ENCODE measurements at regions of chr9 and their contacts with region 1.

Region 1: DNA sequence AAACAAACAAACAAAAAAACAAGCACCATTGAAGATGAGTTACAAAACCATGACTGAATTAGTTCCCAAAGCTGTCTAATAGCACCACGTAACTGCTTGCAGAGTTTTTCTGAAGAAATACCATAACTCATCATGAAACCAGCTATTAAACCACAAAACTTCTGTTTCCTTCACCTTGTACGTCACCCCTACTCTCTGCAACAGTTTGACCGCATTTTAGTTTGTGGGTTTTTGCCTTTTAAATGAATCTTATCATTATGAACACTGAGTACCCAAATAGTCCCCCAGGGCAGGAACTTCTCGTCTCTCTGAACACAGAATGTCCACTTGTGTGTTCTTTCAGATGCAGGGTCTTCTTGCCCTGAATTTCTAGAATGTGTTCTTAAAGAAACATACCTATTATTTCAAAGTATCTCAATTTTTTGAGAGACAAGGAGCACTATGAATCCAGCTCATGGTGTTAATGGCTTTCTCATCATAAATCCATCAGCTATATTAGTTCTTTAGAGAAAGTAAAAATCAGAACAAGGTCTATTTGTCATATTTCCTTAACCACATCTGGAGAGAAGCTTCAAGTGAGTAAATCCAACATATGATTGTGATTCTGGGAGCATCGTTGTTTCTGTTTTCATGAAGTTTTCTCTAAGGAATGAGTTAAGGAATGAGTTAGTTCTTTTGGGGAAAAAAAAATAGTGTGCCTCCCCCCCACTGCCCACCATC is 210.6 kb downstream of the AUH start:
- DNase-seq: peak; percentile 65
- H3K4me3 Mint-ChIP-seq: peak overlapping the region; percentile 48
- H3K27ac Mint-ChIP-seq: peak overlapping the region; percentile 91
- H3K4me1 Mint-ChIP-seq: peaks cover 94% of the 10 kb centered on the region
- H3K27me3 Mint-ChIP-seq: no peaks in the 10 kb centered on the region

Region 2: GRCh38 chr9:90921111-90921510 is 230.0 kb before region 1 on chr9:
- CTCF ChIA-PET with region 1: no interaction called
- POLR2A ChIA-PET with region 1: no interaction called
- DNase-seq: no peak
- H3K4me3 Mint-ChIP-seq: no peak overlapping the region
- H3K27ac Mint-ChIP-seq: no peak overlapping the region
- H3K4me1 Mint-ChIP-seq: peaks cover 2% of the 10 kb centered on the region
- H3K27me3 Mint-ChIP-seq: peaks cover 4% of the 10 kb centered on the region

Region 3: GRCh38 chr9:91036826-91037510 is 114.2 kb before region 1 on chr9:
- CTCF ChIA-PET with region 1: interaction called, 15 read pairs
- POLR2A ChIA-PET with region 1: interaction called, 17 read pairs
- DNase-seq: peak; percentile 85
- H3K4me3 Mint-ChIP-seq: peak overlapping the region; percentile 31
- H3K27ac Mint-ChIP-seq: peak overlapping the region; percentile 74
- H3K4me1 Mint-ChIP-seq: peaks cover 65% of the 10 kb centered on the region
- H3K27me3 Mint-ChIP-seq: no peaks in the 10 kb centered on the region

Region 4: DNA sequence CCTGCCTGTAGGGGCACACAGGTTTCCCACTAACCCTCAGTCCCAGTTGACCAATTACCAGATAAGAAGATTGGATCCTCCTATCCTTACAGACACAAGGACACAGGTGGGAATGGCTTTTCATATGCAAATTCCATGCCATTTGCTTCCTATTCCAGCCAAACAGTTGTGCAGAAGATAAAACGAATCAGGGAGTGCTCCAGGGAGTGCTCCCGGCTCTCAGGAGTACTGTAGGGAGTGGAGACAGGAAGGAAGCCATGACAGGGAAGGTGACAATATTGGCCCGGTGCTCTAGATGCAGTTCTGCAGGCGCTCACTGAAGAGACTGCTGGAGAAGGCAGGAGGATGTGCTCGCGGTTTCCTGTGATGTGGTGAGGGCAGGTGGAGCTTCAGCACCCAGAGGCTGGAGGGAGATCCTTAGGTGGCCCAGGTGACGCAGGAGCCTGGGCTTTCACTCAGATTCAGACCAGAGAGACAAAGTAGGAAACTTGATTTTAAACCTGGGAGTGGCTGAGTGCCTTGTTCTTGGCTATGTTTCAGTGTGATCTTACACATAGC is 49.5 kb before region 1 on chr9:
- CTCF ChIA-PET with region 1: interaction called, 8 read pairs
- POLR2A ChIA-PET with region 1: interaction called, 101 read pairs
- DNase-seq: peak; percentile 94
- H3K4me3 Mint-ChIP-seq: peak overlapping the region; percentile 62
- H3K27ac Mint-ChIP-seq: peak overlapping the region; percentile 81
- H3K4me1 Mint-ChIP-seq: peaks cover 77% of the 10 kb centered on the region
- H3K27me3 Mint-ChIP-seq: no peaks in the 10 kb centered on the region

Region 5: DNA sequence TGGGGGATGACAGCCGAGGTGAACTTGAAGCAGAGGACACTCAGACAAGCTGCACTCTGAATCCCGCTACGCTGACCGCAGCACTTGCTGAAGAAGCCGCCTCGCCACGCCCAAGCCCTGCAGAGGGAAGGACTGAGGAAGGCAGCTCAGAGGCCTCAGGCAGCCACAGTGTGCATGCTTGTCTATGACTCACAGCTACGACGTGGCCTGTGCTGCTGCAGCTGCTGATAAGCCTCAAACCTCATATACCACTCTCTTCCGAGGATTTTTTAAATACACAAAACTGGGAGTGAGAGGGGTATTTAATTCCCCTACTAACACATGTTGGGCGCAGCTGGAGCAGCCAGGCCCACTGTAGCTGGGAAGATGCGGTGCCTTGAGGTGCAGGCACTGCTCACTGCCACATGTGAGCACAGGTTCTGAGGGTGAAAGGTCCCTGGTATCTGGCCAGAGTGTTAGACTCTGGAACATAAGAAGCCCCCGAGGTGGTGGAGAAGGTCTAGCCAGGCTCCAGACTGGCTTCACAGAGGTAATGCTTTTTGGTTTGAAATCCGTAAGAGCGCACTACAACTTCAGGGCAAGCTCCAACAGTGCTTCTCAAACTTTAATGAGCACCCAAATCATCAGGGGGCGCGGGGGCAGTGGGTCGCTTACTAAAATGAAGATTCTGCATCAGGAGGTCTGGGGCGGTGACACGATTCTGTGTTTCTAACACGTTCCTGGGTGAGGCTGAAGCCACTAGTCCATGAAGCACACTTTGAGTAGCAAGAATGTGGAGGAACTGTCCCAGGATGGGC is 13.8 kb after region 1 on chr9:
- CTCF ChIA-PET with region 1: interaction called, 26 read pairs
- POLR2A ChIA-PET with region 1: interaction called, 346 read pairs
- DNase-seq: peak; percentile 91
- H3K4me3 Mint-ChIP-seq: peak overlapping the region; percentile 88
- H3K27ac Mint-ChIP-seq: peak overlapping the region; percentile 94
- H3K4me1 Mint-ChIP-seq: peaks cover 70% of the 10 kb centered on the region
- H3K27me3 Mint-ChIP-seq: no peaks in the 10 kb centered on the region

Region 6: GRCh38 chr9:91193658-91194391 is 42.7 kb after region 1 on chr9:
- CTCF ChIA-PET with region 1: interaction called, 11 read pairs
- POLR2A ChIA-PET with region 1: interaction called, 126 read pairs
- DNase-seq: peak; percentile 92
- H3K4me3 Mint-ChIP-seq: peak overlapping the region; percentile 77
- H3K27ac Mint-ChIP-seq: peak overlapping the region; percentile 98
- H3K4me1 Mint-ChIP-seq: peaks cover 75% of the 10 kb centered on the region
- H3K27me3 Mint-ChIP-seq: no peaks in the 10 kb centered on the region

Region 7: DNA sequence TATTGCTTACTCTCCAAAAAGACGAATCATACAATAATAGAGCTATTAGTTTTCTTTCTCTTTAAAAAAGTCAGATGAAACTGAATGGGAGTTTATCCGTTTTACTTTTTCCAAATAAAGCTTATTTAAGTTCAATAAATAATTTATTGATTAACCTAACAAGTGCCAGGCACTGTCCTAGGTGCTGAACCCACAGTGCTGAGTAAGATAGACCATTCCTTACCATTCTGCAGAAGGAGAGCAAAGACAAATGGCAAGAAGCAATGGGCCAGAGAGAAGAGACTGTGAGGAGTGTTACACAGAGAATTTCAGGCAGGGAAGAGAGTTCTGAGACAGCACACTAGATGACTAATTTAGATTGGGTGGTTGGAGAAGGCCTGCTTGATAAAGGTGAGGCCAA is 83.4 kb after region 1 on chr9:
- CTCF ChIA-PET with region 1: no interaction called
- POLR2A ChIA-PET with region 1: no interaction called
- DNase-seq: no peak
- H3K4me3 Mint-ChIP-seq: no peak overlapping the region
- H3K27ac Mint-ChIP-seq: no peak overlapping the region
- H3K4me1 Mint-ChIP-seq: no peaks in the 10 kb centered on the region
- H3K27me3 Mint-ChIP-seq: no peaks in the 10 kb centered on the region

Region 8: GRCh38 chr9:91346652-91347051 is 195.5 kb after region 1 on chr9:
- CTCF ChIA-PET with region 1: no interaction called
- POLR2A ChIA-PET with region 1: interaction called, 15 read pairs
- DNase-seq: no peak
- H3K4me3 Mint-ChIP-seq: no peak overlapping the region
- H3K27ac Mint-ChIP-seq: no peak overlapping the region
- H3K4me1 Mint-ChIP-seq: peaks cover 68% of the 10 kb centered on the region
- H3K27me3 Mint-ChIP-seq: no peaks in the 10 kb centered on the region

Measured in activated CD4-positive, alpha-beta memory T cell treated with anti-CD3 and anti-CD28 coated beads, Interleukin-2, amount 10 ng/mL, durations not matched to agents 7 days and 5 days (primary cell).